Psoas muscle (tissue), 8 donors: ENCODE measurements at regions of chr5 and their contacts with region 1.

Region 1: GRCh38 chr5:129125810-129126209 is 31.3 kb downstream of the ISOC1 start:
- DNase-seq: no peak
- ATAC-seq: no peak
- H3K4me3 ChIP-seq: no peak overlapping the region
- H3K27ac ChIP-seq: no peak overlapping the region
- H3K4me1 ChIP-seq: no peaks in the 10 kb centered on the region
- H3K27me3 ChIP-seq: no peaks in the 10 kb centered on the region
- CTCF ChIP-seq: peak; percentile 6

Region 2: DNA sequence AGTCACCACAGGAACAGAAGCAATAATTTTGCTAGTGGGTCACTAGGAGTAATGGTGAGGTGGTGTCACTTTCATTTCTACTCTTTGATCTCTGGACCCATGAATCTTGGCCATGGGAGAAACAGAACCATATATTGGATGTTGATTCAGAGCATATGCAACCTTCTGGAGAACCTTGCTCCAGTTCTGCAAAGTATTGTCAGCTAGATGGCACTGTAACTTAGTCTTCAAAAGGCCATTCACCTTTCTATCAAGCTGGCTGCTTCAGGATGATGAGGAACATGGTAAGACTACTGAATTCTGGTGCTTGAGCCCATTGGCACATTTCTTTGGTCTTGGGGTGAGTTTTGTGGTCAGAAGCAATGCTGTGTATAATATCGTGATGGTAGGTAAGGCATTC is 458.7 kb before region 1 on chr5:
- intact Hi-C with region 1: no loop called
- DNase-seq: no peak
- ATAC-seq: no peak
- H3K4me3 ChIP-seq: no peak overlapping the region
- H3K27ac ChIP-seq: no peak overlapping the region
- H3K4me1 ChIP-seq: no peaks in the 10 kb centered on the region
- H3K27me3 ChIP-seq: no peaks in the 10 kb centered on the region
- CTCF ChIP-seq: no peak

Region 3: DNA sequence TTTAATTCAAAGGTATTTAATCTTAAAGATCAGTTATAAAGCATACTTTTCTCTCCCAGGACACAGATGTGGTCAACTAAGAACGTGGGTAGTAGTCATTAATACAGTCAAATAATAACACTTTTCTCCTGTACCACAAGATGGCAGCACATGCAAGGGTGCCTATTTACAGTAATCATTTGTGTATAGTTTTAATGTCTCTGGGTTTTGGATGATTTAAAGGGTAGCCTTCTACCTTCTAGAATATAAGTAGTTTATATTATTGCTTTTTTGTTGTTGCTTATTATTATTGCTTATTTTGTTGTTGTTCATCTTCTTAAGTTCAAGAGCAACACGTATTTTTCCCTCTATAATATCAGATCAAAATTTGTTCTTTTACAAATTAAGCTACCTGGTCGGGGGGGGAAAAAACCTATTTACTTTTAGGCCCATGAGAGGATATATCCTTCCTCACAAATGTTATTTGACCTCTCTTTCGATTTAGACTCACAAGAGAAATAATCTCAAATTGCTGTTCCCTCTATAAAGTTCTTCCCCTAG is 220.2 kb before region 1 on chr5:
- intact Hi-C with region 1: loop called in 1 of 2 experiments (anchors 10 kb)
- DNase-seq: no peak
- ATAC-seq: peak in 3 of 4 donors; percentile 67 to 73 (median 71)
- H3K4me3 ChIP-seq: no peak overlapping the region
- H3K27ac ChIP-seq: no peak overlapping the region
- H3K4me1 ChIP-seq: no peaks in the 10 kb centered on the region
- H3K27me3 ChIP-seq: no peaks in the 10 kb centered on the region
- CTCF ChIP-seq: peak; percentile 82

Region 4: GRCh38 chr5:129204525-129204924 is 78.7 kb after region 1 on chr5:
- intact Hi-C with region 1: no loop called
- DNase-seq: no peak
- ATAC-seq: no peak
- H3K4me3 ChIP-seq: no peak overlapping the region
- H3K27ac ChIP-seq: no peak overlapping the region
- H3K4me1 ChIP-seq: no peaks in the 10 kb centered on the region
- H3K27me3 ChIP-seq: no peaks in the 10 kb centered on the region
- CTCF ChIP-seq: no peak

Region 5: GRCh38 chr5:129474544-129474943 is 348.7 kb after region 1 on chr5:
- intact Hi-C with region 1: no loop called
- DNase-seq: no peak
- ATAC-seq: no peak
- H3K4me3 ChIP-seq: no peak overlapping the region
- H3K27ac ChIP-seq: no peak overlapping the region
- H3K4me1 ChIP-seq: no peaks in the 10 kb centered on the region
- H3K27me3 ChIP-seq: no peaks in the 10 kb centered on the region
- CTCF ChIP-seq: no peak